ENCODE measurements at regions of chr10 and their contacts with region 1.

Region 1: GRCh38 chr10:68331455-68332258 is at the start of gene HNRNPH3:
- DNase-seq: peak; percentile 98
- ATAC-seq: peak; percentile 86
- H3K4me3 Mint-ChIP-seq: peak within 1 kb of the TSS; percentile 99
- H3K27ac Mint-ChIP-seq: peak within 1 kb of the TSS; percentile 99
- H3K4me1 Mint-ChIP-seq: peaks cover 67% of the 10 kb centered on the region
- H3K27me3 Mint-ChIP-seq: no peaks in the 10 kb centered on the region
- CTCF ChIP-seq: no peak
- total RNA-seq, gene HNRNPH3: 101 and 113 TPM in 2 replicates

Region 2: DNA sequence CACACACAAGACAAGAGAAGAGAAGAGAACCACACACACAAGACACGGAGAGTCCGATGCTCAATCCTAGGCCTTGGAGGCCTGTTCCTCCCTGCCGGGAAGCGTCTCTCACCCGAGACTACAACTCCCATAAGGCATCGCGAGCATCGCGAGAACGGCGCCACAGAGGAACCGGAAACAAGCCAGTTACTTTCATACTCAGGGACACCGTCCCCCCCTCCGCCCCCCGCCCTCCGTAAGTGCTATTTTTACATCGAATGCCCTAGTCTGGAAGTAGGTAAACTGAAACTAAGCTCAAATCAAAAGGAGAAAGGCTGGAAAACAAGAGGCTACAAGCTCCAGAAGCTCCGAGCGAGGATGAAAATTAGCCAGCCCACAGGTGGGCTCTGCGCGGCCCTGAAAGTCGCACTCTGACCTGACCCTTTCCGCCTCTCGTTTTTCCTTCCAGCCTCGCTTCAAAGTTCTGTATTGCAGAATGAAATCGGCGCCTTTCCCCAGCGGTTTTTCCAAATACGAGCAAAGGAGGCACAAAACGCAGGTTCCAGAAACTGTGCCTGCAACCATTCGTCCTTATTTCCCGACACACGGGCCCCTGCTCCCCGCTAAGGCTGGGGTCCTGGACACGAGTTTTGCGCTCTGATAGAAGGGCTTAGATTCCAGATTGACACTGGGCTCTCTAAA is 482.2 kb before region 1 on chr10:
- CTCF ChIA-PET with region 1: no interaction called
- POLR2A ChIA-PET with region 1: interaction called, 15 read pairs
- intact Hi-C with region 1: loop called (anchors 1 kb)
- DNase-seq: peak; percentile 90
- ATAC-seq: peak; percentile 95
- H3K4me3 Mint-ChIP-seq: peak overlapping the region; percentile 94
- H3K27ac Mint-ChIP-seq: peak overlapping the region; percentile 96
- H3K4me1 Mint-ChIP-seq: peaks cover 13% of the 10 kb centered on the region
- H3K27me3 Mint-ChIP-seq: no peaks in the 10 kb centered on the region
- CTCF ChIP-seq: no peak

Region 3: DNA sequence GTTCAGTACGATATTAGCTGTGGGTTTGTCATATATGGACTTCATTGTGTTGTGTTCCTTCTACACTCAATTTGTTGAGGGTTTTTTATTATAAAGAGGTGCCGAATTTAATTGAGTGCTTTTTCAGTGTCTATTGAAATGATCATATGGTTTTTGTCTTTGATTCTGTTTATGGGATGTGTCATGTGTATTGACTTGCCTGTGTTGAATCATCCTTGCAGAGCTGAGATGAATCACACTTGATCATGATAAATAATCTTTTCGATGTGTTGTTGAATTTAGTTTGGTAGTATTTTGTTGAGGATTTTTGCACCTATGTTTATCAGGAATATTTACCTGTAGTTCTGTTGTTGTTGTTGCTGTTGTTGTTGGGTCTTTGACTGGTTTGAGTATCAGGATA is 139.5 kb before region 1 on chr10:
- CTCF ChIA-PET with region 1: no interaction called
- POLR2A ChIA-PET with region 1: no interaction called
- intact Hi-C with region 1: no loop called
- DNase-seq: no peak
- ATAC-seq: no peak
- H3K4me3 Mint-ChIP-seq: no peak overlapping the region
- H3K27ac Mint-ChIP-seq: no peak overlapping the region
- H3K4me1 Mint-ChIP-seq: no peaks in the 10 kb centered on the region
- H3K27me3 Mint-ChIP-seq: peaks cover 13% of the 10 kb centered on the region
- CTCF ChIP-seq: no peak

Region 4: DNA sequence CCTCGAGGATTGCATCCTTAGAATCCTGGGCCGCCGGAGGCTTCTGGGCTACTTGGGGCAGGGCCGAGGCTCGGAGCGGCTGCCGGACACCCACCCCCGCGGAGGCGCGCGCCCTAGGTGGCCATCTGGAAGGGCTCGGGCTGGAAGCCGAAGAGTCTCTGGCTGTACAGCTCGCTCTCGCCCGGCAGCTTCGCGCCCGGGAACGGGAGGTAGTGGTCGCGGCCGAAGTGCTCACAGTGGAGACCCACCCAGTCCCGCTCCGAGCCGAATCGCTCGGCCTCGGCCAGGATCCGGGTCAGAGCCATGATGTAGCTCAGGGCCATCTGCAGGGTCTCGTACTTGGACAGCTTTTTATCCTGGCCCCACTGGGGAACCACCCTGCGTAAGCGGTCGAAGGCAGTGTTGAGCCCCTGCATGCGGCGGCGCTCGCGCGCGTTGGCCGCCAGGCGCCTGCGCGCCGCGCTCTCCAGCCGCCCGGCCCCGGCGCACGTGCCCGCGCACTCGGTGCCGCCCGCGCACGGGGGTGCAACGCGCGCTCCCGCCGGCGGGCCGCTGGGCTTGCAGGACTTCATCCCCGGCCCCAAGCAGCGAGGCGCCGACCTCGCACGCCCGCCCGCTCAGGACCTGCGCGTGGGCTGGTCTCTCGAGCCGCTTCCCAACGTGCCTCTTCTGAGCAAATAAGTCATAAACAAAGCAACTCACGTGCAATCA is 100.4 kb before region 1 on chr10:
- CTCF ChIA-PET with region 1: no interaction called
- POLR2A ChIA-PET with region 1: interaction called, 5 read pairs
- intact Hi-C with region 1: loop called (anchors 1 kb)
- DNase-seq: peak; percentile 46
- ATAC-seq: peak; percentile 85
- H3K4me3 Mint-ChIP-seq: peak overlapping the region; percentile 81
- H3K27ac Mint-ChIP-seq: no peak overlapping the region
- H3K4me1 Mint-ChIP-seq: peaks cover 8% of the 10 kb centered on the region
- H3K27me3 Mint-ChIP-seq: peaks cover 38% of the 10 kb centered on the region
- CTCF ChIP-seq: no peak

Region 5: DNA sequence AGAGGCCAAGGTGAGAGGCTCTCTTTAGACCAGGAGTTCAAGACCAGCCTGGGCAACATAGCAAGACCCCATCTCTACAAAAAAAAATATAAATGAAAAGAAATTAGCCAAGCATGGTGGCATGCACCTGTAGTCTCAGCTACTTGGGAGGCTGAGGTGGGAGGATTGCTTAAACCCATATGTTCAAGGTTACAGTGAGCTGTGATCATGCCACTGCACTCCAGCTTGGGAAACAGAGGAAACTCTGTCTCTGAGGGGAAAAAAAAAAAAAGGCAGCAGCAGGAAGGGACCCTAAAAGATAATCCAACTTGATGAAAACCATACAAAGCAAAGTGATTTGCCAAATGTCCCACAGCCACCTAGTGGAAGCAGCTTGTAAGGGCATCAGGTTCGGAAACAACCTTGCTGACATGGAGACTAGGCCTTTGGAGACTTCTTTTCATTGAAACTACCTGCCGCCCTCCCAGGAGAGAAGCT is 16.6 kb after region 1 on chr10:
- CTCF ChIA-PET with region 1: interaction called, 3 read pairs
- POLR2A ChIA-PET with region 1: interaction called, 18 read pairs
- intact Hi-C with region 1: loop called (anchors 1 kb)
- DNase-seq: no peak
- ATAC-seq: peak; percentile 73
- H3K4me3 Mint-ChIP-seq: no peak overlapping the region
- H3K27ac Mint-ChIP-seq: peak overlapping the region; percentile 56
- H3K4me1 Mint-ChIP-seq: peaks cover 2% of the 10 kb centered on the region
- H3K27me3 Mint-ChIP-seq: no peaks in the 10 kb centered on the region
- CTCF ChIP-seq: no peak

Region 6: DNA sequence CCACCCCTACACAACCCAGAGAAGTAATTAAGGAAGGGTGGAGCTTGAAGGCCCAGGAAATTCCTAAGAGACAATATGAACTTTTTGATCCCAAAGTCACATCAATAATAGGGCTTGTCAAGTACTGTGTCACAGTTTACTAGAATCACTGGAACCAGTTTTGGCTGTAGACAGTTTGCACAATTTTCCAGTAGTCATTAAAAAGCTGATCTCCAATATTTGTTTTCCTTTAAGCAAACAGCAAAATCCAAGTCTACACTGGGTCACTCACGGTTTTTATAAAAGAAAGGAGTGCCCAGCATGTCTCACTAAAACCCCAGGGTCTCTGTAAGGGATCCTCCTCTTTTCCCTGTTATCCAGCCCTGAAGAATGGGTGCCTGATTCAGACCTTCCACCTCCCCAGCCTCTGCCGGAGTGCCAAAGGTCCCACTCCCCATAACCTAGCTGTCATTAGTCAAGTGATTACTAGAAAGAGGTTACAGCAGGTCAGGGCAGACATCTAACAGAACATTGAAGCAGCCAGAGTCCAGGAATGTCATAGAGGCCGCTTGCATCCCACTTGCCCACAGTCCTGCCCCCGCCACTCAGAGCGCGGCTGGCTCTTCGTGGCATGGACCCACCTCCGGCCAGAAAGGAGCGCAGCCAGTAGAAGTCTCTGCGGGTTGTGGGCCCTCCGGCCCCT is 195.1 kb after region 1 on chr10:
- CTCF ChIA-PET with region 1: no interaction called
- POLR2A ChIA-PET with region 1: no interaction called
- intact Hi-C with region 1: loop called (anchors 1 kb)
- DNase-seq: no peak
- ATAC-seq: no peak
- H3K4me3 Mint-ChIP-seq: peak overlapping the region; percentile 86
- H3K27ac Mint-ChIP-seq: peak overlapping the region; percentile 73
- H3K4me1 Mint-ChIP-seq: peaks cover 14% of the 10 kb centered on the region
- H3K27me3 Mint-ChIP-seq: no peaks in the 10 kb centered on the region
- CTCF ChIP-seq: no peak

Region 7: DNA sequence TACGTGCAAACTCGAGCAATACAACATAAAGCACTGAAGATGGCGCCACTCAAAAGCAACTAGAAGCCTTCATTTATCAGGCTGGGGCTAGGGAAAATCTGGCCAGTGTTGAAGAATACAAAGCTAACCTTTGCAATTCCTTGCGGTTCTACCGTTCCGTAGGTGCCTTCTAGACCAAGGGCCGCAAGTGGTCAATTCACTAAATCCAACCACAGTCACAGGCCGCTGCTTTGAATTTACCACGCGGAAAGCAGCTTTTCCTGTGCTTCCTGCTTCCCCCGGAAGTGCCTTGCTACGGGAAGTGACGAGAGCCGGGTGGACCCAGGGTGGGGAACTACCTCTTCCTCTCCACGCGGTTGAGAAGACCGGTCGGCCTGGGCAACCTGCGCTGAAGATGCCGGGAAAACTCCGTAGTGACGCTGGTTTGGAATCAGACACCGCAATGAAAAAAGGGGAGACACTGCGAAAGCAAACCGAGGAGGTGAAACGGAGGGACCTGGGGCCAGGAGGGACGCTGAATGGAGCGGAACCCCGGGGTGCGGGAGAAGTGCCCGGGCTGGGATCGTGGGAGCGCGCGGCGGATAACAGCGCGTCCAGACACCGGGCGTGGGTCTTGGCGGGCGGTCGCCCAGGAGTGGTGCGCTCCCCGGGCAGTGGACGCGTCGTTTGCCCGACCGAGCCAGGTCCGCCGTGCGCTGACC is 624.3 kb after region 1 on chr10 and contains the start of gene DDX21:
- CTCF ChIA-PET with region 1: no interaction called
- POLR2A ChIA-PET with region 1: no interaction called
- intact Hi-C with region 1: loop called (anchors 1 kb)
- DNase-seq: peak; percentile 79
- ATAC-seq: peak; percentile 82
- H3K4me3 Mint-ChIP-seq: peak within 1 kb of the TSS; percentile 100
- H3K27ac Mint-ChIP-seq: peak within 1 kb of the TSS; percentile 100
- H3K4me1 Mint-ChIP-seq: peaks cover 41% of the 10 kb centered on the region
- H3K27me3 Mint-ChIP-seq: no peaks in the 10 kb centered on the region
- CTCF ChIP-seq: no peak
- total RNA-seq, gene DDX21: 111 and 112 TPM in 2 replicates